Activated naive CD8-positive, alpha-beta T cell treated with anti-CD3 and anti-CD28 coated beads, Interleukin-2, amount 10 ng/mL, durations not matched to agents 7 days and 5 days (primary cell): ENCODE measurements at regions of chr5 and their contacts with region 1.

Region 1: DNA sequence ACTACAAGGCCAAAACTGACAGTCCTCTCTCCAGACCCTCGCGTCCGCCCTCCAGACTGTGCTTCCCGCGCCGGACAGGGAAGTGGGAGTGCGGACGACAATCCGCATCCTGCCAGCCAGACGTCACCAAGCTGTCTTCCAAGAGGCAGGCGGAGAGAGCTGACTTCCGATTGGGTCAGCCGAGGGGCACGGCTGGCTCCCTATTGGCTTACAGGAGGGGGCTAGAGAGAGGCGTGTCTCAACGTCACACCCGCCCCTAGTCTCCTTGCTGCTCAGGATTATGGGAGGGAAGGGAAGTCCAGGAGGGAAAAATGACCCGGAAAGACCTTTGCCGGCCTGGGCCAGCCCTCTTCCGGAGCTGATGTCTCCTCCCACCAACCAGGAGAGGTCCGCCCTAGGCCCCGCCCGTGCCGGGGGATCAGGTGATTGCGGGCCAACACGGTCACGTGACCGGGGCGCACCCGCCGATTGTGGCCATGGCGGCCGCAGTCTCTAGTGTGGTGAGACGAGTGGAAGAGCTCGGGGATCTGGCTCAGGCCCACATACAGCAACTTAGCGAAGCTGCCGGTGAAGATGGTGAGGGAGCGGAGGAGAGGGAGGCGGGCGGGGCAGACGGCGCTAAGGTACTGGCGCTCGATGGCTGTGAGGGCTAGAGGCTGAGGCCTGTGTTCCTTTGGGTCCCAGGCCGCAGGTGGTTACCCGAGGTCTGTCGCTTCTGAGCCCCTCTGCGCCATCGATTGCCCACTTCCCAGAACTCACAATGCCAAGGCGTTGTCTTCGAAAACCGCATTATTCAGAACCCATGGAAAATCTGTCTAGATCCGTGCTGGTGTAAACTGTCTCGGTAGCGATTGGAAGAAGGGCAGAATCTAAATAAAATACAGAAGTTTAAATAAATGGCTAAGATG is at the start of gene RIMOC1:
- DNase-seq: peak; percentile 99
- ATAC-seq: peak; percentile 97
- H3K4me3 Mint-ChIP-seq: peak within 1 kb of the TSS; percentile 97
- H3K27ac Mint-ChIP-seq: peak within 1 kb of the TSS; percentile 98
- H3K4me1 Mint-ChIP-seq: peaks cover 32% of the 10 kb centered on the region
- H3K27me3 Mint-ChIP-seq: peaks cover 11% of the 10 kb centered on the region
- total RNA-seq, gene RIMOC1: 24.3 to 27.3 TPM

Region 2: GRCh38 chr5:41815663-41816229 is 88.4 kb before region 1 on chr5:
- POLR2A ChIA-PET with region 1: no interaction called
- DNase-seq: no peak
- ATAC-seq: no peak
- H3K4me3 Mint-ChIP-seq: no peak overlapping the region
- H3K27ac Mint-ChIP-seq: no peak overlapping the region
- H3K4me1 Mint-ChIP-seq: peaks cover 20% of the 10 kb centered on the region
- H3K27me3 Mint-ChIP-seq: no peaks in the 10 kb centered on the region

Region 3: GRCh38 chr5:41869739-41870626 is 34.2 kb before region 1 on chr5 and contains the start of gene OXCT1:
- POLR2A ChIA-PET with region 1: interaction called, 34 read pairs
- DNase-seq: peak; percentile 92
- ATAC-seq: peak; percentile 94
- H3K4me3 Mint-ChIP-seq: peak within 1 kb of the TSS; percentile 92
- H3K27ac Mint-ChIP-seq: peak within 1 kb of the TSS; percentile 88
- H3K4me1 Mint-ChIP-seq: peaks cover 39% of the 10 kb centered on the region
- H3K27me3 Mint-ChIP-seq: no peaks in the 10 kb centered on the region
- total RNA-seq, gene OXCT1: 54.0 to 59.9 TPM

Region 4: GRCh38 chr5:41893074-41893851 is 10.9 kb before region 1 on chr5:
- POLR2A ChIA-PET with region 1: interaction called, 12 read pairs
- DNase-seq: no peak
- ATAC-seq: no peak
- H3K4me3 Mint-ChIP-seq: peak overlapping the region; percentile 59
- H3K27ac Mint-ChIP-seq: peak overlapping the region; percentile 44
- H3K4me1 Mint-ChIP-seq: peaks cover 17% of the 10 kb centered on the region
- H3K27me3 Mint-ChIP-seq: peaks cover 22% of the 10 kb centered on the region

Region 5: GRCh38 chr5:41924872-41925554 is 20.9 kb after region 1 on chr5 and contains the start of gene FBXO4:
- POLR2A ChIA-PET with region 1: interaction called, 47 read pairs
- DNase-seq: peak; percentile 91
- ATAC-seq: peak; percentile 98
- H3K4me3 Mint-ChIP-seq: peak within 1 kb of the TSS; percentile 90
- H3K27ac Mint-ChIP-seq: peak within 1 kb of the TSS; percentile 93
- H3K4me1 Mint-ChIP-seq: peaks cover 12% of the 10 kb centered on the region
- H3K27me3 Mint-ChIP-seq: no peaks in the 10 kb centered on the region
- total RNA-seq, gene FBXO4: 13.0 to 15.3 TPM